ENCODE measurements at regions of chr11 and their contacts with region 1.

Region 1: DNA sequence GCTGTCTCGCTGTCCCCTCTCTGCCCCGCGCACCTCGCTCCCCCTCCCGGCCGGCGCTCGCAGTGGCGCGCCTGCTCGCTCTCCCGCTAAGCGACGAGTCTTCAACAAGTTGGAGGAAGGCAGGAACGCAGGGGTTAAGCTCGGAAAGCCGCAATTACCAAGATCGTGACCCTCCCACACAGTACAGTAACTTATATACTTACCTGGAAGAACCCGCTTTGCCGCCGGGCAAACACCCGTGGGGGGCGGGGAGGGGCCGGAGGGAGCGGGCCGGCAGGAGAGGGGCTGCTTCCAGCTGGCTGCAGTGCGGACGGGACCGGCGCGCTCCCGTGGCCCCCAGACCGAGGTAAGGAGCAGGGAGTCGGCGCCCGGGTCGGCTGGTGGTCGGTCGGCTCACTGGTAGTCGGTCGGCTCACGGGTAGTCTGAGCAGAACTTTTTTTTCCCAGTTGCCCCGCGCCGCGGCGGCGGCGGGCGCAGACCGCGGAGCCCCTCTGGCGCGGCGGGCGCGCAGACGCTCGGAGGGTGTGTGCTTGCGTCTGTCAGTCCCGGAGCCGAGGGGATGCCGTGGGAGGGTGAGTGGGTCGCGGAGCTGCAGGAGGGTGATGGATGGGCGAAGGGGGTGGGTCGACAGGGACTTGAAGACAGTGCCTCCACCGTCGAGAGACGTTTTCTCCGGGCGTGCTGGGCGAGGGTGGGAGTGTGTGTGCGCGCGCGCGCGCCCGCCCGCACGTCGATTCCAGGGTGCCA is 101.2 kb upstream of the HSD17B12 start:
- DNase-seq: peak; percentile 51
- H3K4me3 ChIP-seq: peak overlapping the region; percentile 27 to 48 (median 43)
- H3K27ac ChIP-seq: no peak overlapping the region
- H3K4me1 ChIP-seq: peaks cover 5% of the 10 kb centered on the region
- H3K27me3 ChIP-seq: peaks cover 86 to 91% of the 10 kb centered on the region in 2 experiments
- CTCF ChIP-seq: peak in 1 of 2 donors; percentile 59
- POLR2A ChIP-seq: no peak

Region 2: DNA sequence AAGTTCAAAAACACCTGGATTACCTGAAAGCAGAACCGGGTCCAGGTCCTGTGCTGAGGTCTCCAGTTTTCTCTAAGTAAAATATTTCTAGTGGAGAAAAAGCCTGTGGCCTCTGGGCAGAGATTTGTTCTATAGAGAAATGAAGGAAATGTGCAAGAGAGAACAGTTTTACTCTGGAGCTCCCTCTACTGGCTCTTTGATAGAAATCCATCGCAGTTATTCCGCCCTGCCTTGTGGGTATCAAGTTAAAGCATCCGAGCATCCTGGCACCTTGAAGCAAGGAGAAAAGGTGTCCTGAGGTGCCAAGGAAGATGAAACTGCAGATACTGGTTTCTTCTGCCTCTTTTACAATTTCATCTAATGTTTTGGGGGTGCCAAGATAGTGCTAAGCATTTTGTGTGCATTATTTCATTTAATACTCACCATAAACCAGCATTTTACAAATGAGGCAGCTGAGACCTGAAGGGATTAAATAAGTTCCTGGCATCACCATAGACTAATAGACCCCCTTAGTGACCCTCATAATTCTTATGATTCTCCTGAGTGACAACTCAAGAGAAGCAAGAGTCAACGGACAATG is 11.9 kb before region 1 on chr11:
- CTCF ChIA-PET with region 1: interaction called, 39 read pairs
- POLR2A ChIA-PET with region 1: no interaction called
- dilution Hi-C with region 1: no loop called
- intact Hi-C with region 1: no loop called
- DNase-seq: peak; percentile 49
- H3K4me3 ChIP-seq: no peak overlapping the region
- H3K27ac ChIP-seq: no peak overlapping the region
- H3K4me1 ChIP-seq: no peaks in the 10 kb centered on the region
- H3K27me3 ChIP-seq: peaks cover 18 to 19% of the 10 kb centered on the region in 2 experiments
- CTCF ChIP-seq: peak; percentile 58 to 77
- POLR2A ChIP-seq: no peak

Region 3: DNA sequence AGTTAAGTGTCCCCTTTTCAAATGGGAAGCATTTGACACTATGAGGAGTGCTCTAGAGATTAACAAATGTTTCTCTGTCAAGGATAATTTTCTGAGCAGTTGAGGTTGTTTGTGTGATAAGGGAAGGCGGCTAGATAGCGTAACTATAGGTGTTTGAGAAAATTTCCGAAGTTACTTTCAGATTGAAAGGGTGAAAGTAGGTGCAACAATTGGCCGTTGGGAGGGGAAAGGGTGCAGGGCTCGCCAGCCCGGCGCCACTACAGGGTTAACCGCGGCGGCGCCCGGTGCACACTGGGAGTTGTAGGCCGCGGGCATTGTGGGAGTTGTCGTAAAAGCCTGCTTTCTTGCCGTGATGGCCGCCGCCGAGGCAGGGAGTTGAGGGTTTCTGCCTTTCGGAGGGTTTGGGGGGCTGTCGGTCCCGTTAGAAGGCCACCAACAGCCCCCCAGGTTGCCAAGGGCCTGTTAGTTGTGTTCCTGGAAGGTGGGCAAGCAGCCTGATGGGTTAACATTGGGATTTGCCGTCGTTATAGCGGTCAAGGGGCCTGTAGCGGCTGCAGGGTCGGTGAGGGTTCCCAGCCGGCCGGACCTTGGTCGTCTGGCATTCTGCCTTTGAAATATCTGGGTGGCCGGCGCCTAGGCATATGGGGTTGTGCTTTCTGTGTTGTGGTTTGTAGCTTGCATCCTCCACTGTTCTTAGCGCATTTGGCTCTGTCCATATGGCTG is 64.7 kb after region 1 on chr11:
- CTCF ChIA-PET with region 1: no interaction called
- POLR2A ChIA-PET with region 1: no interaction called
- dilution Hi-C with region 1: no loop called
- intact Hi-C with region 1: loop called (anchors 5 kb)
- DNase-seq: peak; percentile 84
- H3K4me3 ChIP-seq: peak overlapping the region; percentile 39 to 92 (median 89)
- H3K27ac ChIP-seq: peak overlapping the region; percentile 47
- H3K4me1 ChIP-seq: peaks cover 13% of the 10 kb centered on the region
- H3K27me3 ChIP-seq: peaks cover 7 to 13% of the 10 kb centered on the region in 2 experiments
- CTCF ChIP-seq: no peak
- POLR2A ChIP-seq: peak; percentile 83

Region 4: DNA sequence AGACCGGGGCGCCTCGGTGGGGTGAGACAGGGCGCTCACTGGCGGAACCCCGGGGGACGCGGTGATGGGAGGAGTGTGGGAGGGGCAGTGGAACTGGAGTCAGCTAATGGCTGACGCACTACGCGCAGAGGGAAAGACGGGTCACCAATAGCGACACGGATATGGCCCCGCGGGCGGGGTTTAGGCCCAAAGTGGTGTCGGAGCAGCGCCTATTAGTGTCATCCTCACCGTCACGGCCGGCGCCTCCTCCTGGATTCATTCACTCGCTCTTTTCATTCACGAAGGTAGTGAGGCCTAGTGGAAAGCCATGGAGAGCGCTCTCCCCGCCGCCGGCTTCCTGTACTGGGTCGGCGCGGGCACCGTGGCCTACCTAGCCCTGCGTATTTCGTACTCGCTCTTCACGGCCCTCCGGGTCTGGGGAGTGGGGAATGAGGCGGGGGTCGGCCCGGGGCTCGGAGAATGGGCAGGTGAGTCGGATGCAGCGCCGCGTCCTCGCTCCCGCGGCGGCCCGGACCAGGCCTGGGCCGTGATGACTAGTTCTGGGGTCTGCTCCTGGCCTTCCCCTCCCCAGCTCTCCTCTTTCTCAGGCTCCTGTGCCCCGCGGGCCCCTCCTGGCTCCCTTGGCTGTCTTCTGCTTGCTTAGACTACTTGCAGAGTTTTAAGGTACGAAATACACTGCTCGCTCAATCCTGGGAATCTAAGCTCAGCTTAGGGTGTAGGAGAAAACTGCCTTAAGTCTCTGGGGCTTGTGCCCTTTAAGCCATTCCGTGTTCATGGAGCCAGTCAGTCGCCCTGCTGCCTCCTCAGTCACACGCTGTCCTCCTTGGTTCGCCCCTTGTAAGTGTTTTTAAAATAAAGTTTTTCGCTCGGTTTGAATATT is 101.4 kb after region 1 on chr11 and contains the start of gene HSD17B12:
- CTCF ChIA-PET with region 1: interaction called, 3 read pairs
- POLR2A ChIA-PET with region 1: no interaction called
- dilution Hi-C with region 1: no loop called
- intact Hi-C with region 1: loop called (anchors 5 kb)
- DNase-seq: peak; percentile 99
- H3K4me3 ChIP-seq: peak within 1 kb of the TSS; percentile 84 to 99 (median 91)
- H3K27ac ChIP-seq: peak within 1 kb of the TSS; percentile 83
- H3K4me1 ChIP-seq: peaks cover 29% of the 10 kb centered on the region
- H3K27me3 ChIP-seq: peaks cover 0 to 6% of the 10 kb centered on the region in 2 experiments
- CTCF ChIP-seq: no peak
- POLR2A ChIP-seq: peak; percentile 89
- total RNA-seq, gene HSD17B12: 96.5 and 96.6 TPM in 2 replicates

Region 5: GRCh38 chr11:43802509-43802908 is 223.2 kb after region 1 on chr11:
- CTCF ChIA-PET with region 1: no interaction called
- POLR2A ChIA-PET with region 1: no interaction called
- dilution Hi-C with region 1: no loop called
- intact Hi-C with region 1: no loop called
- DNase-seq: peak; percentile 12
- H3K4me3 ChIP-seq: no peak overlapping the region
- H3K27ac ChIP-seq: no peak overlapping the region
- H3K4me1 ChIP-seq: no peaks in the 10 kb centered on the region
- H3K27me3 ChIP-seq: no peaks in the 10 kb centered on the region
- CTCF ChIP-seq: peak; percentile 9 to 40
- POLR2A ChIP-seq: no peak

Measured in endothelial cell of umbilical vein (primary cell).